ENCODE measurements at regions of chr2 and their contacts with region 1.

Region 1: DNA sequence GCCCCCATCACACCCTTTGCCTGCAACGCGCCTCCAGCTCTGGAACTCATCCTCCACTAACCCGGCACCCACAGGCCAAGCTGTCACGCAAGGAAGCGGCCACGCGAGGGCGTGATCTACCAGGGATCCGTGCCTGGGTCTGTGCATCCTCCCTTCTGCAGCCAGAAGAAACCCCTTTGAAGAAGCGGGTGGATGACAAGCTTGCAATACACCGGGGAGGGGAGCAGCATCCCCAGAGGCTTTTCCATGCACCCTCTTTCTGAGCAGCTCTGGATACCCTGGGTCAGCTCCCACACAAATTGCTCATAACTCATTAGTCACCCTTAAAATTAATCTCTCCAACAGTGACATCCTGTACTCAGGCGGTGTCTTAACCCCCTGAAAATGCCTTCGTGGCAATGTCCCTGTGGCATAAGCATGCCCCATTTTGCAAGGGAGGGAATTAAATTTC is 47.6 kb downstream of the PDCL3 start:
- DNase-seq: peak; percentile 89

Region 2: GRCh38 chr2:100625717-100626116 is 15.3 kb after region 1 on chr2:
- intact Hi-C with region 1: no loop called
- DNase-seq: peak; percentile 62

Region 3: DNA sequence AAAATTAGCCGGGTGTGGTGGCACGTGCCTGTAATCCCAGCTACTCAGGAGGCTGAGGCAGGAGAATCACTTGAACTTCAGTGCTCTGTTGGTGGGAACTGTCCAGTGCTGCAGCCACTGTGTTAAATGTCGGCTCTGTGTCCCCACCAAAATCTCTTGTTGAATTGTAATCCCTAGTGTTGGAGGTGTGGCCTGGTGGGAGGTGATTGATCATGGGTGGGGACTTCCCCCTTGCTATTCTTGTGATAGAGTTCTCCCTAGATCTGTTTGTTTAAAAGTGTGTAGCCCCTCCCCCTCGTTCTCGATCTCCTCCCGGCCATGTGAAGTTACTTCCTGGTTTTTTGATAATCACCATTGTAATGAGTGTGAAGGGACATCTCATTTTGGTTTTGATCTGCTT is 381.9 kb after region 1 on chr2:
- intact Hi-C with region 1: loop called in 1 of 2 experiments (anchors 5 kb)
- DNase-seq: no peak